Gastrocnemius medialis (tissue), 4 donors: ENCODE measurements at regions of chrX and their contacts with region 1.

Region 1: DNA sequence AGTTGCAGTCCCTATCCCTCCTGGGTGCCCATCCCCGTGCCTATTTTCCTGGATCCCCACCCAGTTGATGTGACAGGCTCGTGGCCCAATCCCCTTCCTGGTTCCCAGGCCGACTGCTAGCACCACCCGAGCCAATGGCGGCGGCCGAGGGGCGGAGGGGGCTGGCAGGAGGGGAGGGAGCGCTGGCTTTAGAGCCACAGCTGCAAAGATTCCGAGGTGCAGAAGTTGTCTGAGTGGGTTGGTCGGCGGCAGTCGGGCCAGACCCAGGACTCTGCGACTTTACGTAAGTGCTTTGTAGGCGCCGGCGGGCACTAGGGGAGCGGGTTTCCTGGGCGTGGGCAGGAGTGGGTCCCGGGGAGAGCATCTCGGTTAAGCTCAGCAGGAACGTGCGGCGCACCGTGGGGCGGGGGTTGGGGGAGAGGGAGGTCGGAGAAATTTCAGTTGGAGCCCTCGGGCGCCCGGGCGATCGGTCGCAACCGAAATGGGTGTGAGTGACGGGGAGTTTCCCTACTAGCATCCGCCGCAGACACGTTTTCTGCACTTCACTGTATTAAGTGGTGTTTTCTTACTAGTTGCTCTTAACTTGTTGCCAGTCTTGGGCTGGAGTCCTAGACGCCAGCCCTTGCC is at the start of gene PLS3:
- DNase-seq: peak; percentile 50 to 77
- ATAC-seq: peak; percentile 69 to 72
- H3K4me3 ChIP-seq: peak within 1 kb of the TSS; percentile 66 to 77 (median 72)
- H3K27ac ChIP-seq: peak within 1 kb of the TSS; percentile 89 to 93 (median 92)
- H3K4me1 ChIP-seq: peaks cover 3 to 10% of the 10 kb centered on the region in 2 donors
- H3K27me3 ChIP-seq: peaks cover 0 to 16% (median 11%) of the 10 kb centered on the region in 3 donors
- CTCF ChIP-seq: no peak
- POLR2A ChIP-seq: peak; percentile 54 to 72
- total RNA-seq, gene PLS3: 15.8 to 23.1 (median 19.5) TPM

Region 2: GRCh38 chrX:115344885-115345614 is 216.0 kb before region 1 on chrX:
- in situ Hi-C with region 1: no loop called
- intact Hi-C with region 1: loop called (anchors 5 kb)
- DNase-seq: peak; percentile 43 to 73
- ATAC-seq: peak; percentile 90 to 92
- H3K4me3 ChIP-seq: no peak overlapping the region
- H3K27ac ChIP-seq: peak overlapping the region; percentile 44 to 71 (median 60)
- H3K4me1 ChIP-seq: peaks cover 4 to 6% of the 10 kb centered on the region in 2 donors
- H3K27me3 ChIP-seq: peaks cover 0 to 3% (median 0%) of the 10 kb centered on the region in 3 donors
- CTCF ChIP-seq: no peak
- POLR2A ChIP-seq: no peak

Region 3: DNA sequence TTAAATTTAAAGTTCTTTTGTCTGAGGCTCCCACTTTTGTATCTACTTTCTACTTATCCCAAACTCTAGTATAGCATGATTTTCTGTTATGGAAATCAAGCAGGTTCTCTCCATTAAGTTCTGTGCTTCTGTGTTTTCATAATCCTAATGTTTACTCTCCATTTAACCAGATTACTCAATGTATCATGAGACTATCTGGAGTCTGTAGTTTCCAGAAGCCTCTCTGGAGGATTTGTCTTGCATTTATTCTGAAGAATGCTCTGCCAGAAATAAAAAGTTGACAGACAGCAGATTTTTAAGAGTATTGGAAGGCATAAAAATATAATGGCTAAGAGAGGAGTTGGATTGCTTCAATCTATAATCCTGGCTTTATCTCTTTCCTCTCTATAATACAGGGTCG is 39.4 kb before region 1 on chrX:
- in situ Hi-C with region 1: no loop called
- intact Hi-C with region 1: no loop called
- DNase-seq: no peak
- ATAC-seq: peak; percentile 47 to 64
- H3K4me3 ChIP-seq: no peak overlapping the region
- H3K27ac ChIP-seq: peak overlapping the region in 1 of 4 donors; percentile 27
- H3K4me1 ChIP-seq: no peaks in the 10 kb centered on the region
- H3K27me3 ChIP-seq: no peaks in the 10 kb centered on the region
- CTCF ChIP-seq: no peak
- POLR2A ChIP-seq: no peak

Region 4: GRCh38 chrX:115625572-115626301 is 64.6 kb after region 1 on chrX:
- in situ Hi-C with region 1: no loop called
- intact Hi-C with region 1: loop called (anchors 5 kb)
- DNase-seq: no peak
- ATAC-seq: peak in 1 of 2 donors; percentile 54
- H3K4me3 ChIP-seq: no peak overlapping the region
- H3K27ac ChIP-seq: peak overlapping the region; percentile 12 to 68 (median 44)
- H3K4me1 ChIP-seq: peaks cover 0 to 8% of the 10 kb centered on the region in 2 donors
- H3K27me3 ChIP-seq: no peaks in the 10 kb centered on the region
- CTCF ChIP-seq: no peak
- POLR2A ChIP-seq: no peak

Region 5: DNA sequence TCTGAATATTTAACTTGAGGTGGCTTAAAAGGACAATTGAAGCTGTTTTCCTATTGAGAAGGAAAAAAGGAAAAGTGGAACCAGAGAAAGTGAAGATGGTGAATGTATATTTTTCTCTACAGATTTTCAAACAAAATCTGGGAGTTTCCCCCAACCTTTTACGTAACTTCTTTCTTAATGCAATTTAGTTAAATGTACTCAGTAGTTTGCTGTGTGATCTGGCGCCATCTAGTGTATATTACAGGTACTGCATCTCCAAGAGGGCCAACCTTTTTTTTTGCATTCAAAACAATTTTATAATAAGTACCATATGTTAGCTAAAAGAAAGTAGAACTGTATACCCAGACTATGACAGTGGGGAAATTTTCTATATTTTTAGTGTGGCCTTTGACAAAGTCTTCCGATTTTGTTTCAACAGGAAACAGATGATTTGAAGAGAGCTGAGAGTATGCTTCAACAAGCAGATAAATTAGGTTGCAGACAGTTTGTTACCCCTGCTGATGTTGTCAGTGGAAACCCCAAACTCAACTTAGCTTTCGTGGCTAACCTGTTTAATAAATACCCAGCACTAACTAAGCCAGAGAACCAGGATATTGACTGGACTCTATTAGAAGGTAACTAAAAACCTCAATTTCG is 81.9 kb after region 1 on chrX:
- in situ Hi-C with region 1: no loop called
- intact Hi-C with region 1: loop called (anchors 5 kb)
- DNase-seq: no peak
- ATAC-seq: no peak
- H3K4me3 ChIP-seq: no peak overlapping the region
- H3K27ac ChIP-seq: peak overlapping the region; percentile 2 to 68 (median 39)
- H3K4me1 ChIP-seq: no peaks in the 10 kb centered on the region
- H3K27me3 ChIP-seq: peaks cover 0 to 2% (median 0%) of the 10 kb centered on the region in 3 donors
- CTCF ChIP-seq: peak; percentile 75 to 98 (median 87)
- POLR2A ChIP-seq: no peak